ENCODE measurements at regions of chr4 and their contacts with region 1.

Region 1: GRCh38 chr4:113404841-113405240 is 355.4 kb downstream of the ANK2 start:
- DNase-seq: no peak
- H3K4me3 ChIP-seq: no peak overlapping the region
- H3K4me3 Mint-ChIP-seq: no peak overlapping the region
- H3K27ac Mint-ChIP-seq: peak overlapping the region; percentile 16
- H3K4me1 ChIP-seq: peaks cover 13% of the 10 kb centered on the region
- H3K4me1 Mint-ChIP-seq: peaks cover 9% of the 10 kb centered on the region
- H3K27me3 ChIP-seq: no peaks in the 10 kb centered on the region
- H3K27me3 Mint-ChIP-seq: no peaks in the 10 kb centered on the region
- CTCF ChIP-seq: no peak

Region 2: GRCh38 chr4:113316879-113317278 is 88.0 kb before region 1 on chr4:
- CTCF ChIA-PET with region 1: no interaction called
- POLR2A ChIA-PET with region 1: no interaction called
- intact Hi-C with region 1: no loop called
- DNase-seq: no peak
- H3K4me3 ChIP-seq: no peak overlapping the region
- H3K4me3 Mint-ChIP-seq: no peak overlapping the region
- H3K27ac Mint-ChIP-seq: no peak overlapping the region
- H3K4me1 ChIP-seq: no peaks in the 10 kb centered on the region
- H3K4me1 Mint-ChIP-seq: no peaks in the 10 kb centered on the region
- H3K27me3 ChIP-seq: no peaks in the 10 kb centered on the region
- H3K27me3 Mint-ChIP-seq: no peaks in the 10 kb centered on the region
- CTCF ChIP-seq: no peak

Region 3: DNA sequence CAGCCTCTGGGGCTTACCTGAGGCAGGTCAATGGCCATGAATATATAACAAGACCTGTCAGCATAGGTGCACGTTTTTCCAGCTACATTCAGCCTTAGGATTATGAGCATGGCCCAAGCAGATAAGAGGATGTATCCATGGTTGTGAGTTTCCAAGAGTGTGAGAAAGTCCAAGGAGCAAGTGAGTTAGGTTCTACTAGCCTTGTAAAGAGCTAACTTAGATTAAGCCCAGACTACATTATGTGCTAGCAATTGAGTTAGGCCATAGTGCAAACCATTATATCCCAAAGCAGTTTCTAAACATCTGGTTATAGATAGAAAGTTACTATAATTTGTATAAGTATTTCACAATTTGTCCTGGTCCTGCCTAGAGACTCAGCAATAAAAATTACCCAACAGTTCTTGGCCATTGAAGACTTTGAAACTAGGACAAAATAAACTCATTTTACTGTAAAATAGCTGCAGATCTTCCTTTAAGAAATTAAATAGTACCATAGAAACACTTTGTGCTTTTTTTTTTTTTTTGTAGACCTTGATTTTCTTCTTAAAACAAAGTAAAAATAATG is 44.7 kb after region 1 on chr4:
- CTCF ChIA-PET with region 1: no interaction called
- POLR2A ChIA-PET with region 1: no interaction called
- intact Hi-C with region 1: loop called (anchors 1 kb)
- DNase-seq: no peak
- H3K4me3 ChIP-seq: no peak overlapping the region
- H3K4me3 Mint-ChIP-seq: no peak overlapping the region
- H3K27ac Mint-ChIP-seq: no peak overlapping the region
- H3K4me1 ChIP-seq: 0 out of 2 replicates have a peak, but pooled peaks cover 11% of the 10 kb centered on the region
- H3K4me1 Mint-ChIP-seq: peaks cover 12% of the 10 kb centered on the region
- H3K27me3 ChIP-seq: no peaks in the 10 kb centered on the region
- H3K27me3 Mint-ChIP-seq: no peaks in the 10 kb centered on the region
- CTCF ChIP-seq: no peak

Region 4: DNA sequence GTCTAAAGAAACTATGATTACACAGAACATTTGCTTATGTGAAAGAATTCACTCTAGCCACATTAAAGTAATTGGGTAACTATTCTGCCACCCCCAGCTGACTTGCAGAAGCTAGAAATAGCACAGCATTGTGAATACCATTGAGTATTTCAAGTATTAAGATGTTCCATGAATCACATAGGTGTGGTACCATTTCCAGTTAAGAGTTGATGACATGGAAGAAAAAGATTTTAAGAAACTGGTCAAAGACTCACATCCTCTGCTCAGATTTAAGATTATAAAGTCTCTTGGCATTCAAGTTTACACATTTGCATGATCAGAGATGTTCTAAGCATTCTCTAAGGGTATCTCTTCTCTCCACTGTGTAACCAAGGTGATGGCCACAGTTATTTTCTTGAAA is 69.2 kb after region 1 on chr4:
- CTCF ChIA-PET with region 1: no interaction called
- POLR2A ChIA-PET with region 1: no interaction called
- intact Hi-C with region 1: loop called (anchors 5 kb)
- DNase-seq: no peak
- H3K4me3 ChIP-seq: no peak overlapping the region
- H3K4me3 Mint-ChIP-seq: no peak overlapping the region
- H3K27ac Mint-ChIP-seq: no peak overlapping the region
- H3K4me1 ChIP-seq: peaks cover 41% of the 10 kb centered on the region
- H3K4me1 Mint-ChIP-seq: peaks cover 25% of the 10 kb centered on the region
- H3K27me3 ChIP-seq: no peaks in the 10 kb centered on the region
- H3K27me3 Mint-ChIP-seq: no peaks in the 10 kb centered on the region
- CTCF ChIP-seq: no peak

Measured in Caco-2 (cell line).